Left ventricle myocardium superior (tissue), 1 donor: ENCODE measurements at regions of chr18 and their contacts with region 1.

Region 1: DNA sequence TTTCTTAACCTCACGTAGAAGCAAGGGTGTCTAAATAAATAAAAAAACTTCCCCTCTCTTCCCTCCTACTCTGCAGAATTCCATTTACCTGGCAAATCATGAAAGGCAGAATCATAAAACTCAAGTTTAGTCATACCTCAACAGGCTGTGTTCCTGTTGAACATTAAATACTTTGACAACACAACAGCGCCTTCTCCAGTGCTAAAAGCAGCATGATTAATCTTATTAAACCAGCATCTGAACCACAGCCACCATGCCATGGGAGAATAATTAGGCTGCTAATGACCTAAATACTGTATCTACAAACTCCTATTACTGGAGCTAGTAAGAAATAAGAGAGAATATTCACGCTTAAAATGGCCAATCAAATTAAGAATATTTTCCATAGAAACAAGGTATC is 68.1 kb downstream of the CDH2 start:
- DNase-seq: no peak
- ATAC-seq: no peak

Region 2: DNA sequence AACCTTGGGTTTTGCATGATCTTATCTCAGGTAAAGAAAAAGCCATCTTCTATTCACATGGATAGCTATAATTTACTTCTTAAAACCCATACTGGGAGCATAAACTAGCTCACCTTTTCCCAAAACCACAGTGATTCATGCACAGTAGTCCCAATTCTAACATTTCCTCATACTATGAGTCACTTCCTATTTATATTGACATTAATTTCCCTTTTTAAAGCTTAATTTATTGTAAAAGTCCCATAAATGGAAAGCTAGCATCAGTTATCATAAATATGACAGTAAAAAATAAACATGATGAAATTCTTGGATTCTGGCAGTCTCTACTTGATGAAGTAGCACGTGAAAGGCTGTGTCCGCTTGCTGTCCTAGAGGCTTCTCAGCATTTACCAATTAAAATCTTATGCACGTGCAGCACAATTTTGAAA is 112.0 kb before region 1 on chr18:
- intact Hi-C with region 1: loop called (anchors 10 kb)
- DNase-seq: no peak
- ATAC-seq: no peak

Region 3: GRCh38 chr18:28045176-28045810 is 63.5 kb before region 1 on chr18:
- intact Hi-C with region 1: loop called (anchors 10 kb)
- DNase-seq: no peak
- ATAC-seq: peak; percentile 39

Region 4: DNA sequence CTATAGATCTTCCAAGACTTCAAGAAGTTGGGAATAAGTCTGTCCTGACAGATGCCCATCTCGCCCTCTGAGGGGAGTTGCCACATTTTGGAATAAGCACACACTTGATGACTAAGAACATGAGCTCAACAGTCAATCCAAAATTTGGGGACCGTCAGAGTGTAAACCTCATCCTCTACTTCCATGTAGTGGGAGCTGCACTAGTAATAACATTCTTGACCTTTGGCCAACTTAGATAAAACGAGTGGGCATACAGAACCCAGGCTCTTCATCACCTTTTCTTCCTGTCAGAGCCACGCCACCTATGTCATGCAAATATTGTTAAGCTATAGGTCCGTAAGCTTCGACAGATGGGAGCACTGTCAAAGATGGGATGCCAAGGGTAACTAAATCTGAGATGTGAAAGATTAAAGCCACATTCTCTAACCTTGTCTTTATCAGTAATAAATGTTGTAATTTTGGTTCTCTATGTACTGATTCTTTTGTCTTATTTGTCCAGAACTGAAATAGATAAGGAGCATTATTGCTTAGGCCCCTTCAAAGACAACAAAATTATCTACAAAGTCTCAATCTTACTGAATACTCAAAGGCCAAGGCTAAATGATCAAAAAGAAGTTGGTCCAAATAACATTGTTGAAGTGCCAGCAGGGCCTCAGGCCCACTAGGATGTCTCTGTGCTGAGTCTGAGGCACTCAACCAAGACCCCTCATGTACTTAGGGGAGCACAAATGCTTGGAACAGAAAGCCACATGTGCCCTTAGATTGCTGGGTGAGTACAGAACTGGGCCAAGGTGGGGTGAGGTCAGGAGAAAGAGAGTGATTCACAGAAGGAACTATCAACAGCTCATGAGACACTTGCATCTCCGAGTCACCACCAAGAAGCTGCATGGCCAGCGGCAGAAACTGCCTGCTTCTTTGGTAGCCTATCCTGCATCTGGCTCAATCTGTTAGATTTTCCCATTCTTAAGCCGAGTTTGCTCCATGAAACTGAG is 53.1 kb after region 1 on chr18:
- intact Hi-C with region 1: no loop called
- DNase-seq: no peak
- ATAC-seq: peak; percentile 49